ENCODE measurements at regions of chr20 and their contacts with region 1.

Region 1: DNA sequence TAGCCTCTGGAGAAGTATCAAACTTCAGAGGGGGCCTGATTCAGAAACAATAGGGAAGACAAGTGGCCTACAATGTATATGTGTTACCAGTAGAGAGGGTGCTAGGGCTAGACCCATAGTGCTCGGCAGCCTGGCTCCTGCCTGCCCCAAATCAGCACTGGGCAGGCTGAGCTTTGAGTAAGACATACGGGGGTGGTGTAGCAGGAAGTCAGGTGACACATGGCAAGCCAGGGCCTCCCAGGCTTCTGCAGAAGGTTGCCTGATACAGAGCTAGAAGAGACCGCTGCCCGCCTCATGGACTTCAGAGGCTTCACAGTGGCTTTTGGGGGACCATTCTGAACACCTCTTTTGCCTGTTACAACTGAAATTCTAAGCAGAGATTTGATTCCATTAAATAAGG is 43.4 kb downstream of the RALY start:
- DNase-seq: no peak
- ATAC-seq: peak; percentile 31
- H3K4me3 Mint-ChIP-seq: no peak overlapping the region
- H3K27ac Mint-ChIP-seq: no peak overlapping the region
- H3K4me1 Mint-ChIP-seq: peaks cover 59% of the 10 kb centered on the region
- H3K27me3 Mint-ChIP-seq: no peaks in the 10 kb centered on the region
- CTCF ChIP-seq: no peak

Region 2: GRCh38 chr20:33387177-33387576 is 649.9 kb before region 1 on chr20:
- CTCF ChIA-PET with region 1: no interaction called
- POLR2A ChIA-PET with region 1: interaction called, 10 read pairs
- intact Hi-C with region 1: no loop called
- DNase-seq: no peak
- ATAC-seq: no peak
- H3K4me3 Mint-ChIP-seq: no peak overlapping the region
- H3K27ac Mint-ChIP-seq: no peak overlapping the region
- H3K4me1 Mint-ChIP-seq: peaks cover 3% of the 10 kb centered on the region
- H3K27me3 Mint-ChIP-seq: no peaks in the 10 kb centered on the region
- CTCF ChIP-seq: no peak

Region 3: DNA sequence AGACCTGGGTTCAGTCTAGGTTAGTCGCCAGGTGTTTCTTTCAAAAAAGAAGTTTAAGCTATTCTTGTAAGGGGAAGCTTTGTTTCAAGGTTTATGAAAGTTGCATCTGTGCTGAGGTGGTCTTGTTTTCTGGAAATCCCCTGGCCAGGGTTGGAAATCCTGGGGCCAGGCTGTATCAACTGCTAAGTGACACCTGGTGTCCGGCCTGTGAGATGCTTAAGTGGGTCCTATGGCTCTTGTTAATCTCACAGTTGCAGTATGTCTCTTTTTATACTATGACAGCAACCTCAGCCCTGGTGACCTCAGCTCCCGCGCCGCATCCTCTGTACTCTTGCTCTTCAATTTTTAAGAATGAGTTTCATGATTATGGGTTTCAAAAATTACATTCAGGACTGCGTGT is 154.0 kb before region 1 on chr20:
- CTCF ChIA-PET with region 1: no interaction called
- POLR2A ChIA-PET with region 1: no interaction called
- intact Hi-C with region 1: no loop called
- DNase-seq: no peak
- ATAC-seq: peak; percentile 71
- H3K4me3 Mint-ChIP-seq: no peak overlapping the region
- H3K27ac Mint-ChIP-seq: peak overlapping the region; percentile 14
- H3K4me1 Mint-ChIP-seq: peaks cover 31% of the 10 kb centered on the region
- H3K27me3 Mint-ChIP-seq: no peaks in the 10 kb centered on the region
- CTCF ChIP-seq: no peak

Measured in activated B cell treated with CpG ODN at 0.5 μM for 24 hours (primary cell).